Left colon (tissue), 2 donors: ENCODE measurements at regions of chr2 and their contacts with region 1.

Region 1: DNA sequence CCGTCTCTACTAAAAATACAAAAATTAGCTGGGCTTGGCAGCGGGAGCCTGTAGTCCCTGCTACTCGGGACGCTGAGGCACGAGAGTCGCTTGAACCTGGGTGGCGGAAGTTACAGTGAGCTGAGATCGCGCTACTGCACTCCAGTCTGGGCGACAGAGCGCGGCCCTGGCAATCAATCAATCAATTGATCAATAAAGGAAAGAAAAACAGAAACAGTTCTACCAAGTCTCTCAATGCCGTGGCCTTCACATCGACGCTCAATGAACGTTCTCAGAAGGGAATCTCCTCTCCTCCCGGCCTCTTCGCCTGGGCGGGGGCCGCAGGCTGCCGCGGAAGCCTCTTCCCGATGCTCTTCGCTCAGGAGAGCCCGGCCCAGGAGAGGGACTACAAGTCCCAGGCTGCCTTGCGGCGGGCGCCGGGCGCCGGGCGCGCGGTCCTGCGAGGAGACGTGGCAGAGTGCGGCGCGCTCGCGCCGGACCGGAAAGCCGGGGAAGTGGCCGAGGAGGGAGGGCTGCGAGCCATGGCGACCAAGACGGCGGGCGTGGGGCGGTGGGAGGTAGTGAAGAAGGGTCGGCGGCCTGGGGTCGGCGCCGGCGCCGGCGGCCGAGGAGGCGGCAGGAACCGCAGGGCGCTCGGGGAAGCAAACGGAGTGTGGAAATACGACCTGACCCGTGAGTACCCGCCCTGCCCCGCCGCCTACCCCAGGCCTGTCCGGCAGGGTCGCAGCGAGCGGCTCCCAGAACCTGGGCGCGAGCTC is at the start of gene TMEM214:
- DNase-seq: peak; percentile 87 to 92
- ATAC-seq: peak; percentile 96
- total RNA-seq, gene TMEM214: 70.2 to 89.7 TPM

Region 2: GRCh38 chr2:26933431-26934334 is 99.0 kb before region 1 on chr2:
- intact Hi-C with region 1: no loop called
- DNase-seq: no peak
- ATAC-seq: no peak

Region 3: DNA sequence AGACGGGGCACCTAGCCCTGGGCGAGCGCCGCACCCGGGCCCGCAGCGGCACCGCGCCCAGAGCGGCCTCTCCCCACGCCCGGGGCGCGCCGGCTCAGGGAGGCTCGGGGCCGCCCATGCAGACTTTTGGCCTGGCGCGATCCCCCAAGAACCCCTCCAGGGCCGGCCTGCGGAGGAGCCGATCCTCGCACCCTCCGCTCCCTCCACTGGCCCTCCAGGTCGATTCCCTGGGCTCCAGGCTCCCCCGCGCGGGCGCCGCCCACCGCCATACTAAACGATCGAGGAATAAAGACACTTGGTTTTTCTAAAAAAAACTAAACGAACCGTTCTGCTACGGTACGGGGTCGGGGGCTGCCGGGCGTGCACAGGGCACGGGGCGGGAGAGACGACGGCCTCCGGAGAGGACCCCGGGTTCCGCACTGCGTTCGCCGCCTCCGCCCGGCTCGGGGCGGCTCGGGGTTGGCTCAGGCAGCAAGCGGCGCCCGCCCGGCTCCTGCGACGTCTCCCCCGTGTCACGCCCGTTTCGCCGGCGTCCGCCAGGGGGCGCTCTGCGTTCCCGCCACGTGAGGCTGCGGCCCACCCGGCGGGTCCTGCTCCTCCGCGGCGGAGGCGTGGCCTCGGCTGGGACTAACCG is 53.5 kb after region 1 on chr2:
- intact Hi-C with region 1: loop called in 1 of 2 experiments (anchors 10 kb)
- DNase-seq: peak; percentile 91 to 96
- ATAC-seq: peak; percentile 83